Dorsolateral prefrontal cortex (tissue), 120 donors: ENCODE measurements at regions of chr10 and their contacts with region 1.

Region 1: DNA sequence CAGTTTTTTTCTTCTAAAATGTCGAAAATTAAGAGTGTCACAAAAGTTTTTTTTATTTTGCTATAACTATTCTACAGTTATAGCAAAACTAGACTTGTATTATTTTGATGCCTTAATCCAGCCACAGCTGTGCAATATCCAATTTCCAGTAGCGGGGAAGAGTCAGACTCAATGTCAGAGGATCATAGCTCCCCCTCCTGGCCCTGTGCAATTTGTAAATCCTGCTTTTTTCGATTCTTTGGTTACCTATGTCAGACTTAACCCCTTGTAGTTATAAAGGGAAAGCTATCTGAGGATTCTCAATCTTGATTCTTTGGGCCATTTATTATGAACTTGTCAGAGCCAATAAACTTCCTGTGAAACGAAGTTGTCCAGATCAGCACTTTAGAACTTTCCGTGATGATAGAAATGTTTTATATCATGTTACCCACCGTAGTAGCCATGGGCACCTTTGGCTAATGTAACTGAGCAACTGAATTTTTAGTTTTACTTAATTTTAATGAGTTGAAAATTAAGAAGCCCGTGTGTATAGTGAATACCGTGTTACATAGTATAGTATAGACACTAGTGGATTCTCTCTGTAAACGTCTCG is 87.7 kb upstream of the PRKCQ start:
- DNase-seq: peak in 4 of 10 donors; percentile 22 to 51 (median 40)
- H3K4me3 ChIP-seq: no peak overlapping the region
- H3K27ac ChIP-seq: no peak overlapping the region
- H3K27me3 ChIP-seq: peaks cover 0 to 7% (median 0%) of the 10 kb centered on the region in 45 donors
- CTCF ChIP-seq: peak; percentile 42 to 88 (median 71)

Region 2: DNA sequence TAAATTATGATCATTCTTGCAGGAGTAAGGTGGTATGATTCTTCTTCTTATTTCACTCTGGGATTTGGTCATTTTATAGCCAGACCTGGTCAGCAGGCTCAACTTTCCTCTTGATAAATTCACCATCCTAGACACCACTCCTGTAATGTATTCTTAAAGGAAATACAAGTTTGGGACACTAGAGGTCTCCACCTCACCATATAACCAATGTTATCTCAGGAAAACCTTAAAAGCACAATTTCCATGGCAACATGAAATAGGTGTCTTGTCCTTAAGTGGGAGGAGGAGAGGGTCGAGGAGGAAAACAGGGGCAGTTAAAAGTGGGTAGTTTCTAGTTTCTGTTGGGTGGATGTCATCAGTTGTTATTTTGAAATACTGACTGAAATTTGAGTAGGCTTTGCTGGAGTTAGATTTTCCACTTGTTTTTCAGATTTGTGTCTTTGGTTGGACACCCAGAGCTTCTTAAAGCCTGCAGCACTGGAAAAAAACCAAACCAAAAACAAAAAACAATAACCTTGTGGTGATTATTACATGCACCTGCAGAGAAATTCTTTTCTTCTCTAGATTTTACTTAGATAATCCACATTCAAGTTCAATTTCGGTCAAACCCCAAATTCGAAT is 250.8 kb before region 1 on chr10:
- intact Hi-C with region 1: loop called (anchors 2 to 5 kb)
- DNase-seq: no peak
- H3K4me3 ChIP-seq: no peak overlapping the region
- H3K27ac ChIP-seq: no peak overlapping the region
- H3K27me3 ChIP-seq: no peaks in the 10 kb centered on the region
- CTCF ChIP-seq: peak; percentile 44 to 84 (median 71)

Region 3: GRCh38 chr10:6929148-6929830 is 261.5 kb after region 1 on chr10:
- intact Hi-C with region 1: no loop called
- DNase-seq: peak in 1 of 10 donors; percentile 80
- H3K4me3 ChIP-seq: peak overlapping the region in 5 of 59 donors; percentile 2 to 27 (median 10)
- H3K27ac ChIP-seq: peak overlapping the region in 51 of 59 donors; percentile 1 to 78 (median 55)
- H3K27me3 ChIP-seq: no peaks in the 10 kb centered on the region
- CTCF ChIP-seq: no peak

Region 4: GRCh38 chr10:7622969-7623368 is 955.2 kb after region 1 on chr10:
- intact Hi-C with region 1: no loop called
- DNase-seq: no peak
- H3K4me3 ChIP-seq: no peak overlapping the region
- H3K27ac ChIP-seq: no peak overlapping the region
- H3K27me3 ChIP-seq: no peaks in the 10 kb centered on the region
- CTCF ChIP-seq: peak in 47 of 56 donors; percentile 14 to 62 (median 35)